Endothelial cell of umbilical vein (primary cell): ENCODE measurements at regions of chr13 and their contacts with region 1.

Region 1: GRCh38 chr13:100514788-100515409 is 73.7 kb downstream of the GGACT start:
- DNase-seq: peak; percentile 79
- H3K4me3 ChIP-seq: no peak overlapping the region
- H3K27ac ChIP-seq: no peak overlapping the region
- H3K4me1 ChIP-seq: no peaks in the 10 kb centered on the region
- H3K27me3 ChIP-seq: no peaks in the 10 kb centered on the region
- CTCF ChIP-seq: peak; percentile 81 to 91
- POLR2A ChIP-seq: no peak

Region 2: GRCh38 chr13:99990126-99990977 is 524.5 kb before region 1 on chr13:
- CTCF ChIA-PET with region 1: interaction called, 4 read pairs
- POLR2A ChIA-PET with region 1: no interaction called
- dilution Hi-C with region 1: no loop called
- intact Hi-C with region 1: loop called (anchors 2 kb)
- DNase-seq: no peak
- H3K4me3 ChIP-seq: no peak overlapping the region
- H3K27ac ChIP-seq: no peak overlapping the region
- H3K4me1 ChIP-seq: no peaks in the 10 kb centered on the region
- H3K27me3 ChIP-seq: peaks cover 88 to 98% of the 10 kb centered on the region in 2 experiments
- CTCF ChIP-seq: no peak
- POLR2A ChIP-seq: no peak

Region 3: GRCh38 chr13:100088644-100089464 is 426.0 kb before region 1 on chr13 and contains the start of gene PCCA:
- CTCF ChIA-PET with region 1: interaction called, 8 read pairs
- POLR2A ChIA-PET with region 1: no interaction called
- dilution Hi-C with region 1: no loop called
- intact Hi-C with region 1: loop called (anchors 2 kb)
- DNase-seq: peak; percentile 94
- H3K4me3 ChIP-seq: peak within 1 kb of the TSS; percentile 56 to 82 (median 82)
- H3K27ac ChIP-seq: peak within 1 kb of the TSS; percentile 43
- H3K4me1 ChIP-seq: peaks cover 8% of the 10 kb centered on the region
- H3K27me3 ChIP-seq: no peaks in the 10 kb centered on the region
- CTCF ChIP-seq: no peak
- POLR2A ChIP-seq: peak; percentile 85
- total RNA-seq, gene PCCA: 19.8 and 20.2 TPM in 2 replicates

Region 4: DNA sequence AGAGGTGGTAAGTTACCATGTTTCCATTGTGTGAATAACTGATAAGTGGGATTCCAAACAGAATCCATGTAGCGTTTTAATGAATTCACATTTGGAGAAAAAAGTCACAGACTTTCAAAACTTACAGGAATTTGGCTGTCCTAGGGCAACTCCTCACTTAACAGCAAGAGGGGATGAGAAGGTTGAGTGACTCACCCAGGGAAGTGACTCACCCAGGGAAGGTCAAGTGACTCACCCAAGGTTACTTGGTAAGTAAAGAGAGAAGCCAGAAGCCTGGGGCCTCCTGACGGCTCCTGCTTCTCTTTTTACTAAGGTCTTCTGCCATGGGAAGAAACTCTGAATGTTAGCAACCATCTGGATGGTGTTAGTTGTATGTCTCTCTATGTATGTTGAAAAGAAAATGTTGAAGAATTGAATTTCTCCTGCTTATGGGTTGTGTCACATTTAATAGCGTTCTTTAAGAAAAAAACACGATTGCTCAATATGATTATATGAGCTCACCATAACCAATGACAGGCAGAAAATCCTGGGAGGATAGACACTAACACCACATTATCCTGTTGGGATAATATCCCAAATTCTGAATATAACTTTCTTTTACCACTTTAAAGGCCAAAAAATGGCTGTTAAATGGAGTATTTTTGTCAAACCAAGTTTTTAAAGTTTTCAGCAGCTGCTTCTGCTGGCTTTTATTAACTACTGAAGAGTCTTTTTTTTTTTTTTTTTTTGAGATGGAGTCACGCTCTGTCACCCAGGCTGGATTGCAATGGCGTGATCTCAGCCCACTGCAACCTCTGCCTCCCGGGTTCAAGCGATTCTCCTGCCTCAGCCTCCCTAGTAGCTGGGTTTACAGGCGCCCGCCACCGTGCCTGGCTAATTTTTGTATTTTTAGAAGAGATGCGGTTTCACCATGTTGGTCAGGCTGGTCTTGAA is 121.9 kb before region 1 on chr13:
- CTCF ChIA-PET with region 1: interaction called, 4 read pairs
- POLR2A ChIA-PET with region 1: interaction called, 4 read pairs
- dilution Hi-C with region 1: no loop called
- intact Hi-C with region 1: loop called (anchors 1 kb)
- DNase-seq: peak; percentile 99
- H3K4me3 ChIP-seq: no peak overlapping the region
- H3K27ac ChIP-seq: peak overlapping the region; percentile 87
- H3K4me1 ChIP-seq: peaks cover 35% of the 10 kb centered on the region
- H3K27me3 ChIP-seq: no peaks in the 10 kb centered on the region
- CTCF ChIP-seq: no peak
- POLR2A ChIP-seq: no peak

Region 5: GRCh38 chr13:100454876-100455275 is 60.0 kb before region 1 on chr13:
- CTCF ChIA-PET with region 1: no interaction called
- POLR2A ChIA-PET with region 1: no interaction called
- dilution Hi-C with region 1: no loop called
- intact Hi-C with region 1: no loop called
- DNase-seq: peak; percentile 36
- H3K4me3 ChIP-seq: no peak overlapping the region
- H3K27ac ChIP-seq: no peak overlapping the region
- H3K4me1 ChIP-seq: peaks cover 3% of the 10 kb centered on the region
- H3K27me3 ChIP-seq: no peaks in the 10 kb centered on the region
- CTCF ChIP-seq: no peak
- POLR2A ChIP-seq: no peak

Region 6: GRCh38 chr13:100608906-100609305 is 94.0 kb after region 1 on chr13:
- CTCF ChIA-PET with region 1: no interaction called
- POLR2A ChIA-PET with region 1: no interaction called
- dilution Hi-C with region 1: no loop called
- intact Hi-C with region 1: no loop called
- DNase-seq: peak; percentile 61
- H3K4me3 ChIP-seq: no peak overlapping the region
- H3K27ac ChIP-seq: peak overlapping the region; percentile 15
- H3K4me1 ChIP-seq: peaks cover 12% of the 10 kb centered on the region
- H3K27me3 ChIP-seq: no peaks in the 10 kb centered on the region
- CTCF ChIP-seq: no peak
- POLR2A ChIP-seq: no peak

Region 7: GRCh38 chr13:100808330-100809266 is 293.7 kb after region 1 on chr13:
- CTCF ChIA-PET with region 1: no interaction called
- POLR2A ChIA-PET with region 1: no interaction called
- dilution Hi-C with region 1: no loop called
- intact Hi-C with region 1: no loop called
- DNase-seq: no peak
- H3K4me3 ChIP-seq: no peak overlapping the region
- H3K27ac ChIP-seq: no peak overlapping the region
- H3K4me1 ChIP-seq: no peaks in the 10 kb centered on the region
- H3K27me3 ChIP-seq: no peaks in the 10 kb centered on the region
- CTCF ChIP-seq: no peak
- POLR2A ChIP-seq: no peak